B cell (primary cell): ENCODE measurements at regions of chr6 and their contacts with region 1.

Region 1: GRCh38 chr6:41683510-41684310 is 45.4 kb downstream of the MDFI start:
- DNase-seq: peak; percentile 88
- ATAC-seq: peak; percentile 82
- H3K4me3 ChIP-seq: peak overlapping the region in 4 of 5 experiments; percentile 51 to 57 (median 52)
- H3K4me3 Mint-ChIP-seq: peak overlapping the region; percentile 66
- H3K27ac ChIP-seq: peak overlapping the region; percentile 29 to 46
- H3K27ac Mint-ChIP-seq: peak overlapping the region; percentile 86
- H3K4me1 ChIP-seq: peaks cover 9 to 26% of the 10 kb centered on the region in 2 donors
- H3K4me1 Mint-ChIP-seq: peaks cover 23% of the 10 kb centered on the region
- H3K27me3 ChIP-seq: no peaks in the 10 kb centered on the region
- H3K27me3 Mint-ChIP-seq: no peaks in the 10 kb centered on the region
- CTCF ChIP-seq: peak; percentile 90

Region 2: DNA sequence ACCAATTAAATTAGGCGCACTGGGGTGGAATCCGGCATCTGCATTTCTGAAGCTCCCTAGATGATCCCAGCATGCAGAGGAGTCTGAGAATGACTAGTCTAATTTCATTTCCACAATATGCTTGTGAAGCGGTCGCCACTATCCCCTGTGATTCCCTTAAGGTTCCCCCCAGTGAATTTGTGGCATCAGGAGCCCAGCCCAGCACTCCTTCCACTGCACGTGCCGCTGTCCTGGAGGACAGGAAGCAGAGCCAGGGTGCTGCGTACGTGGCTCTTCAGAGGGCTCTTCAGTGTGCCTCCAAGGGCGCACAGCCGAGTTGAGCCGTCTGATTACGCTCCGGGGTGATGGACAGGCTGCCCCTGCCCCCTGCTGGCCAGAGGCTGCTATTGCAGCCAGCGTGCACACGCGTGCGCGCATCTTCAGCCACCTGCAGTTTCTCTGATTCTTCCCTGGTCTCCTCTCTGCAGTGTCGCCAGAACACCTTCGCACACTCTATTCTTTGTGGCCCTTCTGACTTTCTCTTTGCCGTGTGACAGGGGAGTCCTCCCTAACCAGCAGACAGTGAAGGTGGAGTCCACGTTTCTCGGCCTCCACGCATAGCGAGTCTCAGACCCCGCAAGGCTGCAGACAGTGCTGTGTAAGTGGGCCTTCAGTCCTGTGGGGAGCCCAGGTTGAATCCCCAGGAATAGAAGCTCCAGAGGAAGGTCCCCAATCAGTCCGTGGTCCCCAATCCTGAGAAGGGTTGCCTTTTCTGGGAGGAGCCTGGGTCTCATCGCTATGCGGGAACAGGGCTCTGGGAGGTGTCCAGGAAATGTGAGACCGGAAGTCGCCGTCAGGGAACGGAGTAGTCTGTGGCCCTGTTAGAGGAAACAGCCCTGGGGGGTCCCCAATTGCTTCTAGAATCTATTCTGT is 364.8 kb before region 1 on chr6:
- CTCF ChIA-PET with region 1: no interaction called
- POLR2A ChIA-PET with region 1: no interaction called
- intact Hi-C with region 1: loop called (anchors 5 kb)
- DNase-seq: peak; percentile 92
- ATAC-seq: peak; percentile 99
- H3K4me3 ChIP-seq: peak overlapping the region; percentile 16 to 54 (median 46)
- H3K4me3 Mint-ChIP-seq: peak overlapping the region; percentile 88
- H3K27ac ChIP-seq: peak overlapping the region; percentile 39 to 55
- H3K27ac Mint-ChIP-seq: peak overlapping the region; percentile 91
- H3K4me1 ChIP-seq: peaks cover 47 to 48% of the 10 kb centered on the region in 2 donors
- H3K4me1 Mint-ChIP-seq: peaks cover 34% of the 10 kb centered on the region
- H3K27me3 ChIP-seq: no peaks in the 10 kb centered on the region
- H3K27me3 Mint-ChIP-seq: no peaks in the 10 kb centered on the region
- CTCF ChIP-seq: peak; percentile 100

Region 3: GRCh38 chr6:41463062-41463930 is 220.4 kb before region 1 on chr6:
- CTCF ChIA-PET with region 1: interaction called, 5 read pairs
- POLR2A ChIA-PET with region 1: no interaction called
- intact Hi-C with region 1: loop called (anchors 1 kb)
- DNase-seq: peak; percentile 65
- ATAC-seq: peak; percentile 68
- H3K4me3 ChIP-seq: no peak overlapping the region
- H3K4me3 Mint-ChIP-seq: no peak overlapping the region
- H3K27ac ChIP-seq: no peak overlapping the region
- H3K27ac Mint-ChIP-seq: no peak overlapping the region
- H3K4me1 ChIP-seq: peaks cover 8 to 10% of the 10 kb centered on the region in 2 donors
- H3K4me1 Mint-ChIP-seq: peaks cover 11% of the 10 kb centered on the region
- H3K27me3 ChIP-seq: peaks cover 0 to 21% (median 1%) of the 10 kb centered on the region in 4 experiments
- H3K27me3 Mint-ChIP-seq: peaks cover 38% of the 10 kb centered on the region
- CTCF ChIP-seq: peak; percentile 72

Region 4: GRCh38 chr6:41697861-41698781 is 14.4 kb after region 1 on chr6:
- CTCF ChIA-PET with region 1: interaction called, 86 read pairs
- POLR2A ChIA-PET with region 1: interaction called, 7 read pairs
- intact Hi-C with region 1: no loop called
- DNase-seq: no peak
- ATAC-seq: no peak
- H3K4me3 ChIP-seq: no peak overlapping the region
- H3K4me3 Mint-ChIP-seq: no peak overlapping the region
- H3K27ac ChIP-seq: peak overlapping the region in 1 of 2 donors; percentile 49
- H3K27ac Mint-ChIP-seq: peak overlapping the region; percentile 71
- H3K4me1 ChIP-seq: peaks cover 56 to 76% of the 10 kb centered on the region in 2 donors
- H3K4me1 Mint-ChIP-seq: peaks cover 79% of the 10 kb centered on the region
- H3K27me3 ChIP-seq: no peaks in the 10 kb centered on the region
- H3K27me3 Mint-ChIP-seq: no peaks in the 10 kb centered on the region
- CTCF ChIP-seq: no peak

Region 5: GRCh38 chr6:41713161-41713649 is 29.5 kb after region 1 on chr6:
- CTCF ChIA-PET with region 1: interaction called, 17 read pairs
- POLR2A ChIA-PET with region 1: interaction called, 4 read pairs
- intact Hi-C with region 1: no loop called
- DNase-seq: no peak
- ATAC-seq: peak; percentile 2
- H3K4me3 ChIP-seq: peak overlapping the region in 1 of 5 experiments; percentile 19
- H3K4me3 Mint-ChIP-seq: peak overlapping the region; percentile 75
- H3K27ac ChIP-seq: peak overlapping the region; percentile 43 to 77
- H3K27ac Mint-ChIP-seq: peak overlapping the region; percentile 94
- H3K4me1 ChIP-seq: peaks cover 73 to 87% of the 10 kb centered on the region in 2 donors
- H3K4me1 Mint-ChIP-seq: peaks cover 91% of the 10 kb centered on the region
- H3K27me3 ChIP-seq: no peaks in the 10 kb centered on the region
- H3K27me3 Mint-ChIP-seq: no peaks in the 10 kb centered on the region
- CTCF ChIP-seq: no peak